ENCODE measurements at regions of chr1 and their contacts with region 1.

Region 1: DNA sequence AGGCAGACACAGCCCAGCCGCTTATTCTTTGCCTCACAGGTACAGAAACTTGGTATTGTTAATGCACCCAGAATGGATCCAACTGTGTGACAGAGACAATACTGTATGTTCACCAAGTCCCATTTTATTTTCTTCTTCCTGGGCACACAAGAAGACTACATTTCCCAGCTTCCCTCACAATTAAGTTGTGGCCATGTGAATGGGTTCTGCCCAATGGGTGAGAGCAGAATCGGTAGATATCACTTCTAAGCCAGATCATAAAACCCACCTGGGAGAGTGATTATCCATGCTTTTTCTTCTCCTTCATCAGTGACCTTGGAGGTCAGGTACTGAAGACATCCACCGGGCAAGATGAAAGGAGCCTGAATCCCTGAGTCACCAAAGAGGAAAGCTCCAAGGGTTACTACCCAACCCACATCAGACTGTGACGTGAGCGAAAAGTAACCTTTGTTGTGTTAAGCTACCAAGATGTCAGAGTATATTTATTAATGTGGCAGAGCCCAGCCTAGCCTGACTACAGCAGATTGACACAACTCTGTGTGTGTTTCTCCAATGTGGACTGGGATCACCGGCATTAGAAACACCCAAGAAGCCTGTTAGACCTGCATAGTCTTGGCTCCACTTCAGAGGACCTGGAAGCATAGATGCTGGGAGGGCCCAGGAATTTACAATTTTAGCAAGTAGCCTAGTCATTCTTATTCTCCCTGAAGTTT is 79.1 kb upstream of the GRIK3 start:
- DNase-seq: no peak
- H3K4me3 ChIP-seq: no peak overlapping the region
- H3K27ac ChIP-seq: no peak overlapping the region
- H3K4me1 ChIP-seq: peaks cover 12% of the 10 kb centered on the region
- CTCF ChIP-seq: no peak

Region 2: DNA sequence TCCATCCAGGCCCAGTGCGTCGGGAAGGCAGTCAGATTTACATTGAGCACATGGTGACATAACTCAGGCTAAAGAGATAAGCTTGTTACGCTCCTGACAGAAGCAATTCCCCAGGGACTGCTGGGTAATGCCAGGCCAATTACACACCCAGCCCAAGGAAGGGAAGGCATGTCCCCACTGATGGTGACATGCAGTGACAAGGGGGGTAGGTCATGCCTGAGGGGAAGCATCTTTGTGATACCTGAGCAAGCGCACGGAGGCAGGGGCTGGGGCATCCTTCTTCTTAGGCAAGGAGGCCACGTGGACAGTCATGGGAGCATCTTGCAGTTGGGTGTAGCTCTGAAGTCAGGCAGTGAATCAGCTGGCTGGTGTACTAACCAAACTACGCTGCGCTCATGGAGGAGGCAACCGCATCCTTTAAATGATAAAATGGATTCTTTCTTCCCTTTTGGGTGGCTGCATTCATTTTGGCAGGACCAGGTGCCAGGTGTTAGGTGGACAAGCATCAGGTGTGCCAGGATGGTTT is 39.5 kb before region 1 on chr1:
- CTCF ChIA-PET with region 1: no interaction called
- POLR2A ChIA-PET with region 1: no interaction called
- intact Hi-C with region 1: loop called (anchors 1 kb)
- DNase-seq: no peak
- H3K4me3 ChIP-seq: no peak overlapping the region
- H3K27ac ChIP-seq: no peak overlapping the region
- H3K4me1 ChIP-seq: no peaks in the 10 kb centered on the region
- CTCF ChIP-seq: no peak